Transverse colon (tissue), 4 donors: ENCODE measurements at regions of chr12 and their contacts with region 1.

Region 1: GRCh38 chr12:58540480-58541299 is 379.6 kb downstream of the LRIG3 start:
- DNase-seq: peak; percentile 61
- H3K4me3 ChIP-seq: no peak overlapping the region
- H3K27ac ChIP-seq: peak overlapping the region in 1 of 4 donors; percentile 4
- H3K4me1 ChIP-seq: peaks cover 0 to 4% (median 0%) of the 10 kb centered on the region in 4 donors
- H3K27me3 ChIP-seq: no peaks in the 10 kb centered on the region
- CTCF ChIP-seq: peak; percentile 57 to 64 (median 60)
- EP300 ChIP-seq: no peak
- POLR2A ChIP-seq: no peak

Region 2: DNA sequence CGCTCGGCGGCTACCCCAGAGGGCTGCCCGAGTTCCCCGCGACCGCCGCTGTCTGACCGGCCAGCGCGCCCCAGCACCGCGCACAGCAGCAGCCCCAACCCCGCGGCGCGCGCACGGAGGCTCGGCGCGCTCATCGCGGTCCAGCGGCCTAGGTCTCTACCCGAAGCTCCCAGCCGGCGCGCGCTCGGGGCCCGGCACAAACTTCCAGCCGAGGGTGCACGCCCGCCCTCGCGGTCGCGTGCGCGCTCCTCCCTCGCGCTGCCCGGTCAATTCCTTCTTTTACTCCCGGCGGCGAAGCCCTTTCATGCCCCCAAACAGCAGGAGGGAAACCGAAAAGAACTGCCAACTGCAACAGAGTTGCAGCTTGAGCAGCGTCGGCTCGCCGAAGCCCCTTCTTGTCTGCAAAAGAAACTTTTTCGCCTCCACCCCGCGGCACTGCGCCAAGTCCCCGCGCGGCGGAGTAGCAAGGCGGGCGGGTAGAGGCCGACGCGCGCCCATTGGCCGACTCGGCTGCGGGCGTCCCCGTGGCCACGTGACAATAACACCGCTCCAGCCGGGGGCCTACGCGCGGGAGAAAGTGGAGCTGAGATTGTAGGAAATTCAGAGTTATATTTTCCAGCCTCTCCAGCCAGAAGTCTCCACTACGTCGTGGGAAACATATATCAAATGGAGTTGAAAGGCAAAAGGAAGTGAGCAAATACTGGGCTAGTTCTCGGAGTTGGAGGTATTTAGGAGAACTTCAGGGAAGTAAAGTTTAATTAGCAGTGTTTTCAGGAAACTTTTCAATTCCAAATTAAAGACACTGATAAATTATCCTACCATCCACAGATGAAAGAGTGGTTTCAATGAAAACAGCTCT is 379.6 kb after region 1 on chr12 and contains the start of gene LRIG3:
- in situ Hi-C with region 1: loop called in 1 of 4 experiments (anchors 25 kb)
- intact Hi-C with region 1: no loop called
- DNase-seq: peak; percentile 88
- H3K4me3 ChIP-seq: peak within 1 kb of the TSS; percentile 81 to 93 (median 88)
- H3K27ac ChIP-seq: peak within 1 kb of the TSS; percentile 96 to 99 (median 96)
- H3K4me1 ChIP-seq: peaks cover 0 to 59% (median 26%) of the 10 kb centered on the region in 4 donors
- H3K27me3 ChIP-seq: peaks cover 5% of the 10 kb centered on the region
- CTCF ChIP-seq: peak; percentile 12 to 58 (median 25)
- EP300 ChIP-seq: no peak
- POLR2A ChIP-seq: peak; percentile 71
- total RNA-seq, gene LRIG3: 43.0 to 115 (median 107) TPM